Activated CD4-positive, alpha-beta T cell treated with anti-CD3 and anti-CD28 coated beads, Interleukin-2, amount 10 ng/mL, durations not matched to agents 7 days and 5 days (primary cell): ENCODE measurements at regions of chr1 and their contacts with region 1.

Region 1: DNA sequence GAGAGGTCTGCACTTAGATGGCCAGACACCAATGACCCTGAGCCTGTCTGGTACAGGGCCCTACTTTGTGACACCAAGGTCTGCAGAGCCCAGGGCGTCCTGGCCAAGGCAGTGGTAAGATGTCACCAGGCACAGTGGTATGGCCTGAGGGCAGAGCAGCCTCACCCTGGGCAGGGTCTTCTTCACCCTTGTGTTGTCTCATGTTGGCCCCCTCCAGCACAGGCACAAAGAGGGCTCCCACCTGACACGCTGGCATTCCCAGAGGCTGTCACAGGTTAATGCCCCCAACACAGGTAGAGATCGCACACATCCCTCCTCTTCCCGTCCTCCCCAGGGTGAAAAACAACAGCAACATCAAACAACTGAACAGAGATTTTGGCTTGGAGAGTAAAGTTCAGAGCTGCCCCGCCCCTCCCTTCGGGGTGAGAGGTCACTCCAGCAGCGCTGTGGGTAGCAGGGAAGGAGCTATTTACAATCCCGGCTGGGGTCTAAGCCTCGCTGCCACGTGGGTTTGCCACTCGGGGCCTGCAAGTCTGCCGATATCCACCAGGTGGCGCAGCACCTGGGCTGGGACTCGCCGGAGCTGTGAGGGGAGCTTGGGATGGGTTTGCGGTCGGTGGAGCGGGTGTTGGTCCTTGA is 12.6 kb downstream of the EFNA3 start:
- DNase-seq: peak; percentile 84
- H3K4me3 Mint-ChIP-seq: no peak overlapping the region
- H3K27ac Mint-ChIP-seq: no peak overlapping the region
- H3K4me1 Mint-ChIP-seq: peaks cover 10% of the 10 kb centered on the region
- H3K27me3 Mint-ChIP-seq: peaks cover 17% of the 10 kb centered on the region

Region 2: GRCh38 chr1:155128755-155129473 is 37.7 kb after region 1 on chr1:
- CTCF ChIA-PET with region 1: interaction called, 19 read pairs
- POLR2A ChIA-PET with region 1: no interaction called
- DNase-seq: no peak
- H3K4me3 Mint-ChIP-seq: peak overlapping the region; percentile 60
- H3K27ac Mint-ChIP-seq: peak overlapping the region; percentile 16
- H3K4me1 Mint-ChIP-seq: peaks cover 42% of the 10 kb centered on the region
- H3K27me3 Mint-ChIP-seq: peaks cover 42% of the 10 kb centered on the region

Region 3: DNA sequence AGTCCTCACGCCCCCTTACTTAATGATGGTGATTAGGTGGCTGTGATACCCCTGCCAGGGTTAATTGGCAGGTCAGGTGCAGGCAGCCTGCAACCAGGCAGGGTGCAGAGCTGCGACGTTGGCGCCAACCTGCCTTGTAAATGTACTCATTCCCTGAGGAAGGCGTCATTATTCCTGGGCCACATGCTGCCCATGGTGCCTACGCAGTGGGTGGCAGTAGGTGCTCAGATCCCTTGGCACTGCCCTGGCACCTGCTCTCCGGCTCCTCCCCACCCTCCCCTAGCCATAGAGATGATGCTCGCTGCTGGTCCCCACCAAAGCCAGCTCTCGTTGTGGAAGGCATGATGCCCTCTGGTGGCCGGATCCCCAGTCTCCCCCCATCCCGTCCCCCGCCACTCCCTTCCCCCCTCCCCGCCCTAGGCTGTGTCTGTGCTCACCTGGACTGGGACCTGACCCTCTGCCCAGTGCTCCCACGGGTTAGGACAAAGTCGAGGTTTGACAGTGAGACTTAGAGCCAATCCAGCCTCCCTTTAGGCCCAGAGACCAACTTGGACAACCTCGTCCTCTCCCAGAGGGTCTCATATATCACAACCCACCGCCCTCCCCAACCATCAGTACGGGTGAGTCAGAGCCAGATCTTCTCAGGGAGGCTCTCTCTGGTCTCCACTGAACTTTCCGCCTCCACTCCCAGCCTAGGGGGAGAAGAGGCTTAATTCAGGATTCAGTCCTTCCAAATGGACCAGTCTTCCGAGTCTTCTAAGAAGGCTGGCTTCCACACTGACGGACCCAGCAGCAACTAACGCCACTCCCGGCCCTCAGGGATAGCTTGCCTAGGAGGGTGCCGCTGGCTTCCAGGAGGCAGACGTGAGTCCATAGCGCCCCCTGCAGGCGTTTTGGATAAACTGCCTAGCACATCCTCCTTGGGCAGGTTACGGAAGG is 76.2 kb after region 1 on chr1:
- CTCF ChIA-PET with region 1: interaction called, 67 read pairs
- POLR2A ChIA-PET with region 1: no interaction called
- DNase-seq: peak; percentile 91
- H3K4me3 Mint-ChIP-seq: peak overlapping the region; percentile 25
- H3K27ac Mint-ChIP-seq: no peak overlapping the region
- H3K4me1 Mint-ChIP-seq: peaks cover 31% of the 10 kb centered on the region
- H3K27me3 Mint-ChIP-seq: no peaks in the 10 kb centered on the region